Thyroid gland (tissue), 4 donors: ENCODE measurements at regions of chr19 and their contacts with region 1.

Region 1: GRCh38 chr19:15449620-15450527 is at the start of gene WIZ:
- DNase-seq: peak; percentile 86 to 87
- H3K4me3 ChIP-seq: peak within 1 kb of the TSS in 2 of 3 donors; percentile 35 to 80
- H3K27ac ChIP-seq: peak within 1 kb of the TSS; percentile 32 to 74 (median 73)
- H3K4me1 ChIP-seq: peaks cover 16 to 22% of the 10 kb centered on the region in 2 donors
- H3K27me3 ChIP-seq: no peaks in the 10 kb centered on the region
- CTCF ChIP-seq: no peak
- POLR2A ChIP-seq: no peak
- total RNA-seq, gene WIZ: 23.0 to 48.5 (median 29.6) TPM

Region 2: DNA sequence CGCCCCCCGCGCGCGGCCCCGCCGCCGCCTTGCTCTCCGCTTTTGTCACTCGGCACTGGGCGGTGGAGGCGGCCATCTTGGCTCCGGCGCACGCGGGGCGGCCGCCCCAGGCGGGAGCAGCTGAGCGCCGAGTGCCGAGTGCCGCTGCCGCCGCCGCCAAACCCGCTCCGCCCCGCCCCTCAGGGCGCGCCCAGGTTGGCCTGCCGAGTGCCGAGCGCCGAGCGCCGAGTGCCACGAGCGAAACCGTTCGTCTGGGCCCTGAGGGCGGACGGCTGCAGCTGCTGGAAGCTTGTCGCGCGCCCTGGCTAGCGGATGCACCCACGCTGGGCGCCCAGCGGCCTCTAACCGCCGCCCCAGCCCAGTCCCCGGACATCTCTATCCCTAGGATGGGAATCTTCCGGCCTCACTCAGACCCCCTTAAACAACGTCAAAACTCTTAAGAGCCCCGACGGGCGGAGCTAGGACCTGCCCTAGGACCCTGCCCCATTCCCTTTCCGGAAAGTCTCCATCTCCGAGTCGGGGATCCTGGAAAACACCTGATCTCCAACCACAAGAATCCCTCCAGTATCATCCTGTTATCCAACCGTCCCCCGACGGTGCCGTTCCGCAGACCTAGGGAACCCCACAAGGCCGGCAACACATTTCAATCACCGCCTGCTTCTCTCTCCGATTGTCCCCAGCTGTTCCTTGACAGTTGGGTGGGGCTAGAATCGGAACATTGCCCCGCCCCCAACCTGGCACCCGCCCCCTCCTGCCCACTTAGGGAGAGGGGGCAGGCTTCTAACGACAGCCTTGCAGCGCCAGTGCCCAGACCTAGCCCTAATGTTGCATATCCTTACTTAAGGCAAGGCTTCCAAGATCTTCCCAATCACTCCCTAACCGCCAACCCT is 17.0 kb before region 1 on chr19:
- intact Hi-C with region 1: loop called (anchors 2 kb)
- DNase-seq: peak; percentile 89 to 92
- H3K4me3 ChIP-seq: peak overlapping the region; percentile 44 to 58 (median 53)
- H3K27ac ChIP-seq: peak overlapping the region; percentile 47 to 85 (median 63)
- H3K4me1 ChIP-seq: peaks cover 16 to 23% of the 10 kb centered on the region in 2 donors
- H3K27me3 ChIP-seq: no peaks in the 10 kb centered on the region
- CTCF ChIP-seq: peak in 1 of 6 experiments; percentile 2
- POLR2A ChIP-seq: peak in 1 of 2 donors; percentile 57

Region 3: GRCh38 chr19:15663247-15663646 is 213.4 kb after region 1 on chr19:
- intact Hi-C with region 1: no loop called
- DNase-seq: no peak
- H3K4me3 ChIP-seq: no peak overlapping the region
- H3K27ac ChIP-seq: no peak overlapping the region
- H3K4me1 ChIP-seq: no peaks in the 10 kb centered on the region
- H3K27me3 ChIP-seq: no peaks in the 10 kb centered on the region
- CTCF ChIP-seq: no peak
- POLR2A ChIP-seq: no peak